CD8-positive, alpha-beta T cell (primary cell): ENCODE measurements at regions of chr5 and their contacts with region 1.

Region 1: GRCh38 chr5:77645158-77645994 is 6.9 kb upstream of the OTP start:
- DNase-seq: peak in 6 of 9 experiments; percentile 16 to 62 (median 48)
- ATAC-seq: peak; percentile 78
- H3K4me3 ChIP-seq: peak overlapping the region; percentile 25 to 36
- H3K4me3 Mint-ChIP-seq: peak overlapping the region; percentile 60
- H3K27ac ChIP-seq: no peak overlapping the region
- H3K27ac Mint-ChIP-seq: no peak overlapping the region
- H3K4me1 ChIP-seq: peaks cover 15% of the 10 kb centered on the region
- H3K4me1 Mint-ChIP-seq: peaks cover 22% of the 10 kb centered on the region
- H3K27me3 ChIP-seq: peaks cover 50 to 58% of the 10 kb centered on the region in 2 experiments
- H3K27me3 Mint-ChIP-seq: peaks cover 82% of the 10 kb centered on the region
- CTCF ChIP-seq: no peak

Region 2: DNA sequence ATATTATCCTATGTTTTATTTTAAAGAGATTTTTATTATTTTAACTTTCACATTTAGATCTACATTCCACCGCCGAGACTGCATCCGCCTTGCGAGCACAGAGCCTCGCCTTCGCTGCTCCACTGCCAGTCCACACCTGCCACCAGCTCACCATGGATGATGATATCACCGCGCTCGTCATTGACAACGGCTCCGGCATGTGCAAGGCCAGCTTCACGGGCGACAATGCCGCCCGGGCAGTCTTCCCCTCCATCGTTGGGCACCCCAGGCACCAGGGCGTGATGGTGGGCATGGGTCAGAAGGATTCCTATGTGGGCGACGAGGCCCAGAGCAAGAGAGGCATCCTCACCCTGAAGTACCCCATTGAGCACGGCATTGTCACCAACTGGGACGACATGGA is 139.4 kb after region 1 on chr5:
- CTCF ChIA-PET with region 1: no interaction called
- POLR2A ChIA-PET with region 1: no interaction called
- intact Hi-C with region 1: loop called (anchors 5 kb)
- DNase-seq: no peak
- ATAC-seq: no peak
- H3K4me3 ChIP-seq: no peak overlapping the region
- H3K4me3 Mint-ChIP-seq: no peak overlapping the region
- H3K27ac ChIP-seq: no peak overlapping the region
- H3K27ac Mint-ChIP-seq: no peak overlapping the region
- H3K4me1 ChIP-seq: no peaks in the 10 kb centered on the region
- H3K4me1 Mint-ChIP-seq: no peaks in the 10 kb centered on the region
- H3K27me3 ChIP-seq: no peaks in the 10 kb centered on the region
- H3K27me3 Mint-ChIP-seq: no peaks in the 10 kb centered on the region
- CTCF ChIP-seq: no peak

Region 3: GRCh38 chr5:78269088-78269703 is 623.8 kb after region 1 on chr5:
- CTCF ChIA-PET with region 1: interaction called, 3 read pairs
- POLR2A ChIA-PET with region 1: no interaction called
- intact Hi-C with region 1: loop called in 1 of 2 experiments (anchors 5 kb)
- DNase-seq: peak in 2 of 9 experiments; percentile 15 to 41
- ATAC-seq: peak; percentile 57
- H3K4me3 ChIP-seq: no peak overlapping the region
- H3K4me3 Mint-ChIP-seq: no peak overlapping the region
- H3K27ac ChIP-seq: no peak overlapping the region
- H3K27ac Mint-ChIP-seq: no peak overlapping the region
- H3K4me1 ChIP-seq: no peaks in the 10 kb centered on the region
- H3K4me1 Mint-ChIP-seq: peaks cover 30% of the 10 kb centered on the region
- H3K27me3 ChIP-seq: no peaks in the 10 kb centered on the region
- H3K27me3 Mint-ChIP-seq: no peaks in the 10 kb centered on the region
- CTCF ChIP-seq: peak; percentile 83